Activated CD4-positive, alpha-beta T cell treated with anti-CD3 and anti-CD28 coated beads for 36 hours (primary cell): ENCODE measurements at regions of chr6 and their contacts with region 1.

Region 1: GRCh38 chr6:87701676-87702588 is at the start of gene AKIRIN2:
- DNase-seq: peak; percentile 98
- ATAC-seq: peak; percentile 75
- H3K4me3 Mint-ChIP-seq: peak within 1 kb of the TSS; percentile 87
- H3K27ac Mint-ChIP-seq: peak within 1 kb of the TSS; percentile 92
- H3K4me1 Mint-ChIP-seq: peaks cover 45% of the 10 kb centered on the region
- H3K27me3 Mint-ChIP-seq: no peaks in the 10 kb centered on the region
- total RNA-seq, gene AKIRIN2: 41.4 to 46.3 TPM

Region 2: DNA sequence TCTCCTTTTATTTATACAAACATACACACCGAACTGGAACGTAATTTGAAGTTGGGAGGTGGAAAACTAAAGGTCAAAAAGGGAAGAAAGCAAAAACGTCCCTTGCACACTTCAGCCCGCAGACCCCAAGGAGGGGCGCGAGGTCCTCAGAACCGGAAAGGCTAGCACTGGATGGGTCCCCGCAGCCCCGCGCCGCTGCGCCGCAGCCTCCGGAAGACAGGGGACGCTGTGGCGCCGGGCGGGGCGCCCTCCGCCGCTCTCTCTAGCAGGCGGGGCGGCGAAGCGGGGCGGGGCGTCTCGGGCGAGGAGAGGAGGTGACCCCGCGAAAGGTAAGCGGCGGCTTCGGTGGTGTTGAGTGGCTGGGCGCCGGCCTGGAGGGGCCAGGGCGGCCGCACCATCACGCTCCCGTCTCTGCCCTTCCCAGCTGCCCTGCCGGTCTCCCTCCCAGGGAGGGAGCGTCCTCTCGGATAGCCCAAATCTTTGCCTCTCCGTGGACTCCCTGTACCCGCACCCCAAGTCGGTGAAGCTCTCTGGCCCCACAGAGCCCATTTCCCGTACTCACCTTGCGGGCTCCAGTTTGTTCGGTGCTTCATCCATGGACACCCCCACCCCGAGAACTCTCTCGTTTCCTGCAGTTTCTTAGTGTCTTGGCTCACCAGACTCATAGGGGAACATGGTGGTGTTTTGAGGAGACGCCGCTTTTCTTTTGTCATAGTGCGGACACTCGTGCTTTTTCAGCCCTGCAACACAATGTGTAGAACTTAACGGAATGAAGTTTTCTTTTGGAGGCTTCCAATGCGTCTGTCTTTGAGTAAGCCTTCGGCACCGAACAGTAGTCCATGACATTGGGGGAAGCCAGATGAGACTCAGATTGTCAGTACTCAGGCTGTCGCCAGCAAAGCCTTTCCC is 379.4 kb before region 1 on chr6 and contains the start of gene SMIM8:
- CTCF ChIA-PET with region 1: no interaction called
- POLR2A ChIA-PET with region 1: no interaction called
- intact Hi-C with region 1: loop called (anchors 1 to 5 kb)
- DNase-seq: peak; percentile 94
- ATAC-seq: peak; percentile 100
- H3K4me3 Mint-ChIP-seq: peak within 1 kb of the TSS; percentile 92
- H3K27ac Mint-ChIP-seq: peak within 1 kb of the TSS; percentile 94
- H3K4me1 Mint-ChIP-seq: peaks cover 16% of the 10 kb centered on the region
- H3K27me3 Mint-ChIP-seq: no peaks in the 10 kb centered on the region
- total RNA-seq, gene SMIM8: 8.5 to 10.1 TPM

Region 3: GRCh38 chr6:87472525-87473418 is 229.2 kb before region 1 on chr6 and contains the start of gene SLC35A1:
- CTCF ChIA-PET with region 1: no interaction called
- POLR2A ChIA-PET with region 1: no interaction called
- intact Hi-C with region 1: loop called (anchors 1 to 2 kb)
- DNase-seq: peak; percentile 92
- ATAC-seq: peak; percentile 90
- H3K4me3 Mint-ChIP-seq: peak within 1 kb of the TSS; percentile 88
- H3K27ac Mint-ChIP-seq: peak within 1 kb of the TSS; percentile 93
- H3K4me1 Mint-ChIP-seq: peaks cover 18% of the 10 kb centered on the region
- H3K27me3 Mint-ChIP-seq: peaks cover 3% of the 10 kb centered on the region
- total RNA-seq, gene SLC35A1: 6.5 to 9.9 TPM

Region 4: DNA sequence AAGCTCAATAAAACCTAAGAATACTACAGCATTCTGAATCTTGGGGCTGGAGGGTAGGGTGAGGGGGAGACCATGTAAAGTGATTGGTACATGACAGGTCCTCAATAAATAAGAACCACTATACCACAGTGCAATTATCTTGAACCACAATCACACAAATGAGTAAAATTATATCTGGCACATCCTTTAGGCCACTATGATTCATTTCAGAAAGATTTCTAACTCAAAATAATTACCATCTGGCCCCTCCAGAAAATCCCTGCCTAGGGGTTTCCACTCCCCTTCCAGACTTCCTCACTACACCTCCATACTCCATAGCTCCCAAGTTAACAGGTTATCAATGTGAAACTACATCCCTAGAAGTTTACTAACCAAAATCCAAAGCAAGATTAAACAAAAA is 19.6 kb before region 1 on chr6:
- CTCF ChIA-PET with region 1: interaction called, 4 read pairs
- POLR2A ChIA-PET with region 1: interaction called, 5 read pairs
- intact Hi-C with region 1: loop called in 1 of 2 experiments (anchors 2 kb)
- DNase-seq: no peak
- ATAC-seq: peak; percentile 83
- H3K4me3 Mint-ChIP-seq: no peak overlapping the region
- H3K27ac Mint-ChIP-seq: peak overlapping the region; percentile 20
- H3K4me1 Mint-ChIP-seq: peaks cover 68% of the 10 kb centered on the region
- H3K27me3 Mint-ChIP-seq: no peaks in the 10 kb centered on the region

Region 5: GRCh38 chr6:87742106-87742505 is 40.2 kb after region 1 on chr6:
- CTCF ChIA-PET with region 1: interaction called, 5 read pairs
- POLR2A ChIA-PET with region 1: interaction called, 11 read pairs
- intact Hi-C with region 1: loop called (anchors 1 kb)
- DNase-seq: peak; percentile 85
- ATAC-seq: peak; percentile 88
- H3K4me3 Mint-ChIP-seq: no peak overlapping the region
- H3K27ac Mint-ChIP-seq: peak overlapping the region; percentile 76
- H3K4me1 Mint-ChIP-seq: peaks cover 31% of the 10 kb centered on the region
- H3K27me3 Mint-ChIP-seq: peaks cover 2% of the 10 kb centered on the region

Region 6: GRCh38 chr6:87832025-87832825 is 130.3 kb after region 1 on chr6:
- CTCF ChIA-PET with region 1: no interaction called
- POLR2A ChIA-PET with region 1: no interaction called
- intact Hi-C with region 1: no loop called
- DNase-seq: no peak
- ATAC-seq: peak; percentile 81
- H3K4me3 Mint-ChIP-seq: peak overlapping the region; percentile 62
- H3K27ac Mint-ChIP-seq: peak overlapping the region; percentile 61
- H3K4me1 Mint-ChIP-seq: peaks cover 9% of the 10 kb centered on the region
- H3K27me3 Mint-ChIP-seq: peaks cover 6% of the 10 kb centered on the region

Region 7: DNA sequence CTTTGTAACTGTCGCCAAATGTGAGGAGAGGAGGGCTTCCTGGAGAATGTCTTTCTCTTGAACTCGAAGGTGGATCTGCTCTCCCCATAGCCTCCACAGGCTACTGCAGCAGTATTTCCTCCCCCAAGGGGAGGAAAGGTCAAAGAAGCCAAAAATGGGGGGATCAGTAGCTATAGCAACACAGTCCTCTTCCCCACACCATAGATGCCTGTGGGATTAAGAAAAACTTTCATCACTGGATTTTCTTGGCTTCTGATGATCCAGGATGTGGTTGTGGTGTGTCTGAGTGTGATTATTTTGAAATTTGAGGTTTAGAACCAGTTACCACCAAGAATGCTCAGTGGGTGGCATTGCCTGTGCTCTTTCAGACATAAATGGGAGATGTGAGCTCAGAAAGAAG is 205.6 kb after region 1 on chr6:
- CTCF ChIA-PET with region 1: interaction called, 3 read pairs
- POLR2A ChIA-PET with region 1: no interaction called
- intact Hi-C with region 1: loop called in 1 of 2 experiments (anchors 10 kb)
- DNase-seq: peak; percentile 27
- ATAC-seq: peak; percentile 73
- H3K4me3 Mint-ChIP-seq: no peak overlapping the region
- H3K27ac Mint-ChIP-seq: no peak overlapping the region
- H3K4me1 Mint-ChIP-seq: peaks cover 27% of the 10 kb centered on the region
- H3K27me3 Mint-ChIP-seq: peaks cover 4% of the 10 kb centered on the region